Caco-2 (cell line): ENCODE measurements at regions of chr5 and their contacts with region 1.

Region 1: GRCh38 chr5:63053019-63053638 is 474.5 kb downstream of the LRRC70 start:
- DNase-seq: no peak
- H3K4me3 ChIP-seq: no peak overlapping the region
- H3K4me3 Mint-ChIP-seq: no peak overlapping the region
- H3K27ac Mint-ChIP-seq: peak overlapping the region; percentile 45
- H3K4me1 ChIP-seq: peaks cover 34% of the 10 kb centered on the region
- H3K4me1 Mint-ChIP-seq: peaks cover 15% of the 10 kb centered on the region
- H3K27me3 ChIP-seq: no peaks in the 10 kb centered on the region
- H3K27me3 Mint-ChIP-seq: no peaks in the 10 kb centered on the region
- CTCF ChIP-seq: no peak

Region 2: DNA sequence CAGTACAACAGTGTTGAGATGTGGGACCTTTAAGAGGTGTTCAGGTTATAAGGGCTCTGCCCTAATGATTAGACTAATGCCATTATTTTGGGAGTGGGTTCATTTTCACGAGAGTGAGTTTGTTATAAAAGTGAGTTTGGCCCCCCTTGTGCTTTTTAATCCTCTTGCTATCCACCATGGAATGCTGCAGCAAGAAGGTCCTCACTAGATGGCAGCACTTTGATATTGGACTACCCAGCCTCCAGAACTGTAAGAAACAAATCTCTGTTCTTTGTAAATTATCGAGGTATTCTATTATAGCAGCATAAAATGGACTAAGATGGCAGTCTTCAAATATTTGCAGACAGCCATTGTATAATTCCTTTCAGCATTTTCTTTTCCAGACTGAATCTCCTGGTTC is 262.1 kb before region 1 on chr5:
- CTCF ChIA-PET with region 1: no interaction called
- POLR2A ChIA-PET with region 1: no interaction called
- intact Hi-C with region 1: loop called (anchors 10 kb)
- DNase-seq: no peak
- H3K4me3 ChIP-seq: no peak overlapping the region
- H3K4me3 Mint-ChIP-seq: no peak overlapping the region
- H3K27ac Mint-ChIP-seq: no peak overlapping the region
- H3K4me1 ChIP-seq: no peaks in the 10 kb centered on the region
- H3K4me1 Mint-ChIP-seq: peaks cover 7% of the 10 kb centered on the region
- H3K27me3 ChIP-seq: no peaks in the 10 kb centered on the region
- H3K27me3 Mint-ChIP-seq: no peaks in the 10 kb centered on the region
- CTCF ChIP-seq: peak in 1 of 2 experiments; percentile 36

Region 3: DNA sequence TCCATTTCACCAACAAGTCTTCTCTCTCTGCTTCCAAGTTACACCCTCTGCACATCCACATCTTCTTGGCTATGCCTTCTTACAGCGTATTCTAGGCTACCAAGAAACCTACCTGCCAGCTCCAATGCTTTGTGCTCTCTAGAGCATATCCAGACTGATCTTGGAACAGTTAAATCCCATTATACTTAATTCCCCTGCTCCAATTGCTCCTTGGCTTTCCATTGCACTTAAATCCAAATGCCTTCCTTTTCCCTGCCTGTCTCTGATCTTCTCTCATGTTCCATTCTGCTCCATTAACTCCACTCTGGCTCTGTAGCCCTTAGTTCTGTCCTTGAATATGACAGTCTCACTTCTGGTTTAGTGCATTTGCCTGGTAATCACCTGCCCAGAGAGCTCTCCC is 152.2 kb before region 1 on chr5:
- CTCF ChIA-PET with region 1: no interaction called
- POLR2A ChIA-PET with region 1: no interaction called
- intact Hi-C with region 1: no loop called
- DNase-seq: no peak
- H3K4me3 ChIP-seq: no peak overlapping the region
- H3K4me3 Mint-ChIP-seq: no peak overlapping the region
- H3K27ac Mint-ChIP-seq: peak overlapping the region; percentile 9
- H3K4me1 ChIP-seq: peaks cover 17% of the 10 kb centered on the region; the same call in 1 of the 2 replicates
- H3K4me1 Mint-ChIP-seq: peaks cover 30% of the 10 kb centered on the region
- H3K27me3 ChIP-seq: no peaks in the 10 kb centered on the region
- H3K27me3 Mint-ChIP-seq: no peaks in the 10 kb centered on the region
- CTCF ChIP-seq: no peak

Region 4: DNA sequence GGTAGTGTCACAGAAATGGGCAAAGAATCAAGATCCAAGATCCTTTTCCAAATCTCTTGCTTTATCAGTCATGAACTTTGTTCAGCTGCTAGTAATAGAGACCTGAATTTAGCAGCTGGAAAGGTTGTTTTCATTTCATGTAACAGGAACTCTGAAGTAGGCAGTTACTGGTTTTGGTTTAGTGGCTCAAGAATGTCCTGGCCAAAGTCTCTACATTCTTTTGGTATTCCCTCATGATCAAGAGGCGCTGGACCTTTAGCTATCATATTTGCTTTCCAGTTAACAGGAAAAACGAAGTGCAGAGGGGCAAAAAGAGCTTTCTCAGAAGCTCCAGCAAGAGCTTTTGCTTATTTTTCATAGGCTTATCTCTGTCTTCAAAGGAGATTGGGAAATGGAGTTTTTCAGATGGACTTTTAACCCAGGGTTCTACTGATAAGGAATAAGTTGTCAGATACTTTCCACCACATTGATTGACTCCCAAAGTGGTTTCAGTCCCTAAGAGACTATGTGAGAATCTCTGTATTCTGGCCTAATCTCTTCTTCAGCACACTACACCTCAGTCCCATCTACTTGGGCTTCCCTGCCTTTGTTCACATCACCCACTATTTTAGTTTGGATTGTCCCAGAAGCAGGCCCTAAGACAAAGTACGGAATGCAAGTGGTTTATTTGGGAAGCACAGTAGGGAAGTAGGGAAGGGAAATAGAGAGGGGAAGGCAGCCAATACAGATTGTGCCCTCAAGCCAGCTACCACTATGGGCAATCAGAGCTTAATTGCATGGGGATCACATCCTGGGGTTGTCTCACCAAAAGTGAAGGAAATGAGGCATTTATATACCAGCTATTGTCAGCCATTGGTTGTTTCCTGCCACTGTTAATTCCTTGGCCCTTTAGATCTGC is 115.2 kb before region 1 on chr5:
- CTCF ChIA-PET with region 1: no interaction called
- POLR2A ChIA-PET with region 1: no interaction called
- intact Hi-C with region 1: loop called (anchors 1 kb)
- DNase-seq: peak; percentile 82 to 84
- H3K4me3 ChIP-seq: no peak overlapping the region
- H3K4me3 Mint-ChIP-seq: peak overlapping the region; percentile 23
- H3K27ac Mint-ChIP-seq: peak overlapping the region; percentile 95
- H3K4me1 ChIP-seq: peaks cover 52% of the 10 kb centered on the region
- H3K4me1 Mint-ChIP-seq: peaks cover 47% of the 10 kb centered on the region
- H3K27me3 ChIP-seq: no peaks in the 10 kb centered on the region
- H3K27me3 Mint-ChIP-seq: no peaks in the 10 kb centered on the region
- CTCF ChIP-seq: no peak

Region 5: DNA sequence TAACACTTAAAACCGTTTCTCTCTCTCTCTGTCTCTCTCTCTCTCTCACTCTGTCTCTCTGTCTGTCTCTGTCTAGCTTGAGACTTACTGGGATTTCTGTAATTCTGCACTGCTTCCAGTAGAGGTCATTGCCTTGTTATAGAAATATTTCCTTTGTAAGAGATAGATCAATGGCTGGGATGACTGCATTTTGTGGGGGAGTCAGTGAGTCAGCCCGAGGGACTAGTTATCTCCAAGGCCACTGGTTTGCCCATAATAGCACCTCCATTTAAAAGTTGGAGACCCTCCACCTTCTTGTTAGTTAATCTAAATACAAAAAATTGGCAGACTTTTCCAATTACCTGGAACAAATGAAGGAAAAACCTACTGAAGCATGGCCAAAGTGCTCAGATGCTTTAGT is 72.7 kb after region 1 on chr5:
- CTCF ChIA-PET with region 1: no interaction called
- POLR2A ChIA-PET with region 1: no interaction called
- intact Hi-C with region 1: loop called (anchors 2 kb)
- DNase-seq: peak; percentile 26 to 31
- H3K4me3 ChIP-seq: no peak overlapping the region
- H3K4me3 Mint-ChIP-seq: no peak overlapping the region
- H3K27ac Mint-ChIP-seq: no peak overlapping the region
- H3K4me1 ChIP-seq: no peaks in the 10 kb centered on the region
- H3K4me1 Mint-ChIP-seq: peaks cover 7% of the 10 kb centered on the region
- H3K27me3 ChIP-seq: no peaks in the 10 kb centered on the region
- H3K27me3 Mint-ChIP-seq: no peaks in the 10 kb centered on the region
- CTCF ChIP-seq: peak; percentile 63

Region 6: GRCh38 chr5:63233911-63234310 is 180.8 kb after region 1 on chr5:
- CTCF ChIA-PET with region 1: no interaction called
- POLR2A ChIA-PET with region 1: no interaction called
- intact Hi-C with region 1: loop called (anchors 1 kb)
- DNase-seq: no peak
- H3K4me3 ChIP-seq: no peak overlapping the region
- H3K4me3 Mint-ChIP-seq: peak overlapping the region; percentile 49
- H3K27ac Mint-ChIP-seq: peak overlapping the region; percentile 35
- H3K4me1 ChIP-seq: peaks cover 15% of the 10 kb centered on the region
- H3K4me1 Mint-ChIP-seq: peaks cover 21% of the 10 kb centered on the region
- H3K27me3 ChIP-seq: no peaks in the 10 kb centered on the region
- H3K27me3 Mint-ChIP-seq: no peaks in the 10 kb centered on the region
- CTCF ChIP-seq: no peak